PC-9 (cell line): ENCODE measurements at regions of chr17 and their contacts with region 1.

Region 1: DNA sequence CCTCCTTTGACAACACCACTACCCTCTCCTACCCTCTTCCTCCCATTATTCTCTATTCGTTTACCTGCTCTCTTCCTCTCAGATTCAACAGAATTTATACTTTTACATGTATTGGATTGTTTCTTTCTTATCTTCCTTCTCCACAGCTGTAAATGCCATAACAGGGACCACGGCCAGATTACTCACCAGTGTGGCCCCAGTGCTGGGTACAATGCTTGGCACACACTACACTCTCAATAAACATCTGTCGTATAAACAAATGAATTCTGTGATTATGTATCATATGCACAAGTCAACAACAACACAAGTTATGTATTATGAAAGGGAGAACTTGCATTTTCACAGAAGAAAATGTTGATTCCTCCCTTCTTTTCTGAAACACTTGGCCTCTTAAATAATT is 20.0 kb downstream of the AARSD1 start:
- DNase-seq: no peak
- H3K4me3 ChIP-seq: no peak overlapping the region
- H3K27ac ChIP-seq: no peak overlapping the region
- H3K4me1 ChIP-seq: no peaks in the 10 kb centered on the region
- H3K27me3 ChIP-seq: no peaks in the 10 kb centered on the region
- CTCF ChIP-seq: no peak

Region 2: DNA sequence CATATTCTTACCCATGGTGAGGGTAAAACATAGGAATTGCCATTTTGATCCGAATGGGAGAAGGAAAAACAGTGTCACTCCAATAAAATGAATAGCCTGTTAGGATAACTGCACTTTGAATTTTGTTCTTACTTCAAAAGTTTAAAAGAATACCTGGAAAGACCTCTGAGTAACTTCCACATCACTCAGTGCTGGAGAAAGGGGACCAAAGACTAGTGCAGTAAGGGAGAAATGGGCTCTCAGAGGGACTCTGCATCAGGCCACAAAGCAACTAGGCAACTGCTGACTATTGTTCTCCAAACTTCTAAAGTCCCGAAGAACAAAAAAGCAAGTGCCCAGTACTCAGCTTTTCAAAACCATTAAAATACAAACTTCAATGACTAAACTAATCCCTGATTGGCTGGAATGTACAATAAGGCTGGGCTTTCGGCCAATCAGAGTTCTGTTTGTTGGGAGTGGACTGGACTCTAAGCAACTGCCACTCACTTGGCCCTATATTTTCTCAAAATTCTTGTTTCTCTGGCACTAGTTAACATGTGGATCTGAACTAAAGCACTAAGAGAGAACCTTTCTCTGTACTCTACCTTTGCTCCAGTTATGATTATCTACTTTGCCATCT is 933.2 kb before region 1 on chr17:
- CTCF ChIA-PET with region 1: no interaction called
- POLR2A ChIA-PET with region 1: no interaction called
- intact Hi-C with region 1: no loop called
- DNase-seq: no peak
- H3K4me3 ChIP-seq: no peak overlapping the region
- H3K27ac ChIP-seq: peak overlapping the region; percentile 37
- H3K4me1 ChIP-seq: peaks cover 39% of the 10 kb centered on the region
- H3K27me3 ChIP-seq: no peaks in the 10 kb centered on the region
- CTCF ChIP-seq: no peak

Region 3: DNA sequence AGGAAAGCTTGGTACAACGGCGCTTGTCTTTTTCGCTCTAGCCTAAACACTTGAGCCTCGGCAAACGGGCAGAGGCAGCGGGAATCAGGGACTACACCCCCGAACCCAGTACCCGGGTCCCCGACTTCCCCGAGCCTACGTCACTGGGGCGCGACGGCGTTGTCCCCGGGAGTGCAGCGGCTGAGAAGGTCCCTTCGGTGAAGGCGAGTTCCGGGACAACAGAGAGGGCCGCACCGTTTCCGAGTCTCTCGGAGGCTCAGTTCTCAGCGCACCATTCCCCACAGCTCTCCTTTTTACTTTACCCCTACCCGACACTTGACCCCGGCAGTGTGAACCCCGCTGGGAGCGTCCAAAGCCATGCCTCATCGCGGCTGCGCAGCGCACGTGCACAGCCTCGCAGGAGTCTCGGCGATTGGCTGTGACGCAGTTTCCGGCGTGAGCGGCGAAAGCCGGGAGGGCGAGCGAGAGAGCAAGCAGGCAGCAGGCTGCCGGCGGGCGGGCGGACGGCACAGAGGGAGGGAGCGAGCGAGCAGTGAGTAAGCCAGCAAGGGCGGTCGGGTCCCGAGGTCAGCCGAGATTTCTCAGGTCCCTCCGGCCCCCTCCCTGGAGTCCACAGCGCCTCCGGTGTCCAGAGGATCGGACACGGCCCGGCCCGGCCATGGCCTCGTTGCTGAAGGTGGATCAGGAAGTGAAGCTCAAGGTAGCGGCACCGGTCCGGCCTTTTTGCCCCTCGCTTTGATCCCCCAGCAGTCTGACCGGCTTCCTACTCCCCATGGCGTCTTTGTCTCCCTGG is 111.0 kb before region 1 on chr17 and contains the start of gene PSME3:
- CTCF ChIA-PET with region 1: no interaction called
- POLR2A ChIA-PET with region 1: interaction called, 28 read pairs
- intact Hi-C with region 1: no loop called
- DNase-seq: peak; percentile 80
- H3K4me3 ChIP-seq: peak within 1 kb of the TSS; percentile 93
- H3K27ac ChIP-seq: peak within 1 kb of the TSS; percentile 77
- H3K4me1 ChIP-seq: peaks cover 16% of the 10 kb centered on the region
- H3K27me3 ChIP-seq: no peaks in the 10 kb centered on the region
- CTCF ChIP-seq: no peak
- total RNA-seq, gene PSME3: 115 and 122 TPM in 2 replicates